ENCODE measurements at regions of chr3 and their contacts with region 1.

Region 1: DNA sequence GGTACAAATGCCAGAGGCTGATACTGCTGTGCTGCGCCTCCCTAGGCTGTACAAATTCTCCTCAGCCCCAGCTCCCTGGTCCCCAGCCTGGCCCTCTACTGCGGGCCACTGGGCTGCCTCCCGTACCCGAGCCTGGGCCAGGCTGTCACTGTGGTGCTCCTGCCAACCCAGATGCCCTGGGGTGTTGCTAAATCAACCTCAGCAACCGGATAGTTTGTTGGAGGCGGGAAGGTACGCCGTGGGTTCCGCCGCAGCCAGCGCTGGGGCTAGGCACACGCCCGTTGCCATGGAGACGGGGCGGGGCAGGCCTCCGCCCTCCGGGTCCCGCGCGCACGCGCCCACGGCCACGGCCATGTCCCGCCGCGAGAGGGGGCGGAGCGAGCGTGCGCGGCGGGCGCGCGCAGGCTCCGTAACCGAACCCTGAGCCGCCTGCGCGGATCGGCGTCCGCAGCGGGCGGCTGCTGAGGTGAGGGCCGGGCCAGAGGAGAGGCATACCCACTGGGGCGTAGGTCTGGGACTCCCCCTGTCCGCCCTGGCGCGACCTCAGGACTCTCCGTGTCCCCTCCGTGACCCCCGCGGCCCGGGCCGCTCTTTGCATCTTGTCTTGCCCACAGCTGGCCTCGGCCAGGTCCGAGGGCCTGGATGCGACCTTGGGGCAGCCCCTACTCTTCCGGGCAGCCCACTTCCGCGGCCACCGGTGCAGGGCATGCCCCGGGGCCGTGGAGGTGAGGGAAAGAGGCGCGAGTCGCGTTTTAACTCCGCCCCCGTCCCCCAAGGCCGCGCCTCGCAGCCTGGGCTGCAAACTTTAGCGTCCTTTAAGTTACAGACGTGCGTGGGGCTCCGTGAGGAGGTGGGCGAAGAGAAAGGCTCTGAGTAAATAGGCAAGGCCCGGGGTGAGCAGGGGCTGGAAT is at the start of gene TEX264:
- DNase-seq: peak; percentile 56 to 94
- H3K4me3 ChIP-seq: peak within 1 kb of the TSS; percentile 88 to 91
- H3K27ac ChIP-seq: peak within 1 kb of the TSS; percentile 83 to 89
- H3K4me1 ChIP-seq: peaks cover 5 to 14% of the 10 kb centered on the region in 2 donors
- H3K27me3 ChIP-seq: no peaks in the 10 kb centered on the region
- CTCF ChIP-seq: no peak
- total RNA-seq, gene TEX264: 69.1 TPM

Region 2: GRCh38 chr3:51538459-51539290 is 132.4 kb before region 1 on chr3 and contains the start of gene RAD54L2:
- intact Hi-C with region 1: loop called (anchors 1 kb)
- DNase-seq: peak; percentile 11 to 88
- H3K4me3 ChIP-seq: peak within 1 kb of the TSS; percentile 83 to 99
- H3K27ac ChIP-seq: peak within 1 kb of the TSS; percentile 90 to 93
- H3K4me1 ChIP-seq: peaks cover 0 to 16% of the 10 kb centered on the region in 2 donors
- H3K27me3 ChIP-seq: no peaks in the 10 kb centered on the region
- CTCF ChIP-seq: peak in 2 of 3 experiments; percentile 10 to 38
- total RNA-seq, gene RAD54L2: 18.3 TPM

Measured in ascending aorta (tissue), 2 donors.